Dorsolateral prefrontal cortex (tissue), 120 donors: ENCODE measurements at regions of chr15 and their contacts with region 1.

Region 1: DNA sequence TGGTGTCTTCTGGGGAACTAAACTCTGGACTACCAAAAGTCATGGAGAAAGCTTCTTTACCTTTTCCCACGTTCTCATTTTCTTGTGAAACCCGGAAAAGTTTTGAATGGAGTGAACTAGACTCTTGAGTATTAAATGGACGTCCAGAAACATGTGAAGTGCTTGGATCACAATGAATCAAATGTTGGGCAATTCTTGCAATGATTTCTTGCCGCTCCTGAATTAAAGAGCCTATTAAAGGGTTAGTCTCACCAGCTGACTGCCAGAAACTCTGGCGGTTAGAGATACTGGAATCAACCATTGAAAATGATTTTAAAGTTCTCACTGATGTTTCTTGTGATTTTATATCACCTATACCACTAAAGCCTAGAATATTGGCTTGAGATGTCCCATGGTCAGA is 40.8 kb upstream of the ARPP19 start:
- DNase-seq: no peak
- H3K4me3 ChIP-seq: no peak overlapping the region
- H3K27ac ChIP-seq: no peak overlapping the region
- H3K27me3 ChIP-seq: no peaks in the 10 kb centered on the region
- CTCF ChIP-seq: no peak

Region 2: DNA sequence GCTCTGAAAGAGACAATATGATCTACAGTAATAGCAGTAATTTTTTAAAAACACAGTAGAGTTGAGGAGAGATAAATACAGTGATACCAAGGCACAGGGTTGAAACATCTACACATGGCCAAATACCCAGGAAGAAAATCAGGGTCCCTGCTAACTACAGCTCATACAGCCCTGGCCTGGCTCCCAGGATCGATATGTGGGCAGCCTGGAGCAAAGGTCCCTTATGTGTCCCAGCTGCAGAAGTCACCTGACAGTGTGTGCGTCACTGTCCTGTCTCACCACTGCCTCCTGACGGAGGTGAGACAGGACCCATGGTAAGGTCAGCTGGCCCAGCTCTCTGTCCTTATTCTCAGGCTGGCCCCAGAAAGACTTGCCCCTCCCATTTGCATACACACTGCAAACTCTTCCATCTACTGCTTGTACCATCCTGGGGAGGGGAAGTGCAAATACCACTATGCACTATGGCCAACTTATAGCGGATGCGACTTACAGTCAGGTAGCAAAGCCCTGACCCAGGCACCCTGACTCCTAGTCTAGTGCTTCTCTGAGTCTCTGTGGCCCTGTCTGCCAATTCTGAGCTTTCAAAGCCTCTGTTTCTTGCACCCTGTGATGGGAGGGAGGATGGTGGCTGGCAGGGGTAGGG is 475.0 kb before region 1 on chr15:
- intact Hi-C with region 1: no loop called
- DNase-seq: no peak
- H3K4me3 ChIP-seq: no peak overlapping the region
- H3K27ac ChIP-seq: peak overlapping the region in 2 of 59 donors; percentile 4 to 21
- H3K27me3 ChIP-seq: no peaks in the 10 kb centered on the region
- CTCF ChIP-seq: no peak

Region 3: DNA sequence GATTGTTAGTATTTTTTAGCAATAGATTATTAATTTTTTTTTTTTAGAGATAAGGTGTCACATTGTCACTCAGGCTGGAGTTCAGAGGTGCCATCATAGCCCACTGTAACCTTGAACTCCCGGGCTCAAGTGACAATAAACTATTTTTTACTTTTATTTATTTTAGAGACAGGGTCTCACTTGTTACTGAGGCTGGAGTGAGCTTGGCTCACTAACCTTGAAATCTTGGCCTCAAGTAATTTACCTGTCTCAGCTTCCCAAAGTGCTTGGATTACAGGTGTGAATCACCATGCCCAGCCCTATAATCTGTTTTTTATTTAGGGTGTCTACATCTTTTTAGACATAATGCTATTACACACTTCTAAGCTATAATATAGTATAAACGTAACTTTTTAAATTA is 32.9 kb before region 1 on chr15:
- intact Hi-C with region 1: loop called in 1 of 2 experiments (anchors 2 kb)
- DNase-seq: no peak
- H3K4me3 ChIP-seq: no peak overlapping the region
- H3K27ac ChIP-seq: no peak overlapping the region
- H3K27me3 ChIP-seq: no peaks in the 10 kb centered on the region
- CTCF ChIP-seq: no peak